ENCODE measurements at regions of chr9 and their contacts with region 1.

Region 1: DNA sequence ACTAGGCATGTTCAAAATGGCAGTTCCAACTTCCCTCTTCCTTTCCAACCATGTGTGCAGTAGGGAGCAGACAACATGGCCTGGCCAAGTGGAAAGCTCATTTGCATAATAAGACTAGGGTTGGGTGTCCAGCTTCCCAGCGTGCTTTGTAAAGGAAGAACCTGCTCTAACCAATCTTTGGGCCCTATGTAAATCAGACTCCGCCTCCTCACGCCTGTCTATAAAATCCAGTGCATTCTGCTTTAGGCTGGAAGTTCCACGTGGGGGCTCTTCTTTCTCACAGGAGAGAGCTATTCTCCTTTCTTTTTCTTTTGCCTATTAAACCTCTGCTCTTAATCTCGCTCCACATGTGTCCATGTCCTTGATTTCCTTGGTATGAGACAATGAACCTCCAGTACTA is 83.4 kb downstream of the GCNT1 start:
- DNase-seq: peak; percentile 55
- H3K4me3 ChIP-seq: no peak overlapping the region
- H3K27ac ChIP-seq: no peak overlapping the region
- H3K4me1 ChIP-seq: no peaks in the 10 kb centered on the region
- H3K27me3 ChIP-seq: no peaks in the 10 kb centered on the region
- CTCF ChIP-seq: no peak

Region 2: GRCh38 chr9:76423216-76424177 is 118.9 kb before region 1 on chr9:
- CTCF ChIA-PET with region 1: no interaction called
- POLR2A ChIA-PET with region 1: no interaction called
- intact Hi-C with region 1: no loop called
- DNase-seq: no peak
- H3K4me3 ChIP-seq: no peak overlapping the region
- H3K27ac ChIP-seq: no peak overlapping the region
- H3K4me1 ChIP-seq: no peaks in the 10 kb centered on the region
- H3K27me3 ChIP-seq: no peaks in the 10 kb centered on the region
- CTCF ChIP-seq: no peak

Region 3: DNA sequence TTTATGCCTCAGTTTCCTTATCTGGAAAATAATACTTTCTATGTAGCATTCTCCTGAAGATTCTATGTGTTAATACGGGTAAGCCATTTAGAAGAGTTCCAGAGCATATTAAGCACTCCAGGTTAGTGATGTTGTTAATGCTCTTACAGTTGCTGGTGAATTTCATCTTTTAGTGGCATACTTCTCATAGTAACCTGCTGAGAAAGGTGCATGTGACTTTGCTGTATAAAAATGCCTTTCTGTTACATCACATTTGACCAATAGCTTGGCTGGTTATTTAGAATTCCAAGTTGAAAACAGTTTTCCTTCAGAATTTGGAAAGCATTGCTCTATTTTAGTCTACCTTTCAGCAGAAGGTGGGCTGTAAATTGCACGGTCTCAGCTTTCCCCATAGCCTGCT is 56.2 kb before region 1 on chr9:
- CTCF ChIA-PET with region 1: no interaction called
- POLR2A ChIA-PET with region 1: no interaction called
- intact Hi-C with region 1: loop called (anchors 10 kb)
- DNase-seq: no peak
- H3K4me3 ChIP-seq: no peak overlapping the region
- H3K27ac ChIP-seq: no peak overlapping the region
- H3K4me1 ChIP-seq: no peaks in the 10 kb centered on the region
- H3K27me3 ChIP-seq: no peaks in the 10 kb centered on the region
- CTCF ChIP-seq: no peak